A673 (cell line): ENCODE measurements at regions of chr2 and their contacts with region 1.

Region 1: DNA sequence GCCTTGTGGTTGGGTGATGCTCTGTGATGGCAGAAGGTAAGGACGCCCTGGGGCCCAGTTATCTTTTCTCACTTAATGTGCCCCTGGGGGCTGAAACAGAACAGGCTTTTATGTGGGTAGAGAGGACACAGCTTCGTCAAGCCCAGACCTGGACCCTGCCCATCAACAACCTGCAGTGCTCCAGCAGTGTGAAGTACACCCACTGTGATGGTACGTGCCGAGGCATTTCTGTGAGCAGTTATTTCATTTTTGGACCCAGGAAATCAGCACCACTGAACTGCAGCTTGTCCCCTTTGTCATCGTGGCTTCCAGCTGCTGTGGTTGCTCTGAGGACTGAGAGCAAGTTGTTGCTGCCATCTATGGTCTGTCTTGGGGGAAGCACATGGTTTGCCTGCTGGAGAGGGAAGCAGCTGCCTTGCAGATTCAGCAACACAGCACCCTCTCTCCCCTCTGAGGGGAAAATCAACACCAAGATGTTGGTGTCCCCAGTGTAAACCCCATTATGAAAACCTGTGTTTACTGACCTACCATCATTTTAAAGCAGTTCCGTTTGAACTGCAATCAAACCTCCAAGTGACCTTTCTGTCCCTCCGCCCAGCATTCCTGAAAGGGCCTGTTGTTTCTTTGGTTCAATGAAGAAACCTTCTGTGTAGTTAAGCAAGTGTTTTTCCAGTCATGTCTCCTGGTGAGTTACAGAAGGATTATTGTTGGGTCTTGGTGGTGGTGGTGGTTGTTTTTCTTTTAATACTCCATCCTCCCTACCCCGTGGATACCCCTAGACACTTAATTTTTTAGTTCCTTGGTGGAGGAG is 158.2 kb downstream of the MGAT5 start:
- DNase-seq: peak; percentile 82
- H3K4me3 ChIP-seq: no peak overlapping the region
- H3K27ac ChIP-seq: no peak overlapping the region
- H3K4me1 ChIP-seq: no peaks in the 10 kb centered on the region
- H3K27me3 ChIP-seq: no peaks in the 10 kb centered on the region
- CTCF ChIP-seq: peak; percentile 67

Region 2: GRCh38 chr2:134245340-134245984 is 166.6 kb before region 1 on chr2:
- CTCF ChIA-PET with region 1: interaction called, 5 read pairs
- POLR2A ChIA-PET with region 1: no interaction called
- intact Hi-C with region 1: loop called (anchors 10 kb)
- DNase-seq: peak; percentile 66
- H3K4me3 ChIP-seq: no peak overlapping the region
- H3K27ac ChIP-seq: no peak overlapping the region
- H3K4me1 ChIP-seq: no peaks in the 10 kb centered on the region
- H3K27me3 ChIP-seq: peaks cover 6% of the 10 kb centered on the region
- CTCF ChIP-seq: peak; percentile 93

Region 3: GRCh38 chr2:134454931-134455330 is 42.9 kb after region 1 on chr2:
- CTCF ChIA-PET with region 1: interaction called, 12 read pairs
- POLR2A ChIA-PET with region 1: no interaction called
- intact Hi-C with region 1: no loop called
- DNase-seq: no peak
- H3K4me3 ChIP-seq: no peak overlapping the region
- H3K27ac ChIP-seq: no peak overlapping the region
- H3K4me1 ChIP-seq: no peaks in the 10 kb centered on the region
- H3K27me3 ChIP-seq: no peaks in the 10 kb centered on the region
- CTCF ChIP-seq: no peak